AG04449 (cell line): ENCODE measurements at regions of chr1 and their contacts with region 1.

Region 1: DNA sequence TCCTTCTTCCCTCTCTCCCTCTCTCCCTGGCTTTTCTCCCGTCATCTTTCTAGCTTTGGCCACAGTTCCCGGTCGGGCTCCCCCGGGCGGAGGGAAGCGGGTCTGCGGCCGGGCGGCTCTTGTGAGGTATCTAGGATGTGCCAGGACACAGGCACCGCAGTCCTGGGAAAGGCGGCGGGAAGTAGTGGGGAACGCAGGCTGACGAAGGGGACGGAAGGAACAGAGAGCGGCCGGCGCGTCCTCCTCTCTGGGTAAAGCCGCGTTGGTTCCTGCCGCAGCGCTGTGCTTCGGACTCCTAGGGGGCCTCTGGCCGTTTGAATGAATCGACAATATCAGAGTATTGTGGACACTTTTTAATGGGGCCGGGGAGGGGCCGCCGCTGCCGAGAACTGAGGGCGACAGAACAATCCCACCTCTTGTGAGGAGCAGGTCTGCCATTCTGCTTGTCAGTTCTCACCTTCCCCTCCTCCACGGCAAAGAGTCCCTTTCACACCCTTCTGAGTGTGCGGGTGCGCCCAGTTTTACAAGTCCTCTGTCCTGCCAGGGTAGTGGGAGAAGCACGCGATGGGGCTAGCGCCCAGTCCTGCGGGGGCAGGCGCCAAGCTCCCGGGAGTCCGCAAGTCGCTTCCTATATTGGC is 1.2 kb upstream of the LHX9 start:
- DNase-seq: no peak
- H3K4me3 ChIP-seq: peak overlapping the region; percentile 80
- CTCF ChIP-seq: peak; percentile 89

Region 2: DNA sequence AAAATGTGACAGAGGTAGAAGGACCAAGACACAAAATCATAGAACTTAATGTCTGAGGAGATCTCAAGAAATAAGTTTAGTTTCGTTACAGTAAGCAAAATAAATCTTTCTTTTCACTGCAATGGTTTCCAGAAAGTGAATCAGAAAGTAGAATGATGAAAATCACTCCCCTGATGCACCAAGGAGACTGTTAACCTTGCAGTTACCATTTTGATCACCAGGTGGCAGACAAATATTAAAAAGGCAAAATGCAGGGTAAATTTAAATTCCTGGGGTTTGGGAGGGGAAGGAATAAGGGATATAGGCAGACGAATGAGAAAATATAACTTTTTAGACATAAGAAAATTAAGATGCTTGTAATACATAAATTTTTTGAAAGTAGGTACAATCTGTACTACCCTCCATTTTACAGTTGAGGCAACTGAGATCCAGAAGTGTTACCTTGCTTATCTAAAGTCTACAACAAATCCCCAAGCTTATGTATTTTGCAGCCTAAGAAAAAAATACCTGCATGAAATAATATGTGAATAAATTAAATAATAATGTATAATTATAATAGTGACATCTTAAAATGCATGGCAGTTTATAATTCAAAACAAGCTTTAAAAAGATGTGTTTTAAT is 394.8 kb before region 1 on chr1:
- CTCF ChIA-PET with region 1: interaction called, 32 read pairs
- POLR2A ChIA-PET with region 1: no interaction called
- DNase-seq: no peak
- H3K4me3 ChIP-seq: no peak overlapping the region
- CTCF ChIP-seq: peak; percentile 62

Region 3: GRCh38 chr1:197526736-197527371 is 389.1 kb before region 1 on chr1:
- CTCF ChIA-PET with region 1: interaction called, 32 read pairs
- POLR2A ChIA-PET with region 1: no interaction called
- DNase-seq: no peak
- H3K4me3 ChIP-seq: no peak overlapping the region
- CTCF ChIP-seq: peak; percentile 2

Region 4: DNA sequence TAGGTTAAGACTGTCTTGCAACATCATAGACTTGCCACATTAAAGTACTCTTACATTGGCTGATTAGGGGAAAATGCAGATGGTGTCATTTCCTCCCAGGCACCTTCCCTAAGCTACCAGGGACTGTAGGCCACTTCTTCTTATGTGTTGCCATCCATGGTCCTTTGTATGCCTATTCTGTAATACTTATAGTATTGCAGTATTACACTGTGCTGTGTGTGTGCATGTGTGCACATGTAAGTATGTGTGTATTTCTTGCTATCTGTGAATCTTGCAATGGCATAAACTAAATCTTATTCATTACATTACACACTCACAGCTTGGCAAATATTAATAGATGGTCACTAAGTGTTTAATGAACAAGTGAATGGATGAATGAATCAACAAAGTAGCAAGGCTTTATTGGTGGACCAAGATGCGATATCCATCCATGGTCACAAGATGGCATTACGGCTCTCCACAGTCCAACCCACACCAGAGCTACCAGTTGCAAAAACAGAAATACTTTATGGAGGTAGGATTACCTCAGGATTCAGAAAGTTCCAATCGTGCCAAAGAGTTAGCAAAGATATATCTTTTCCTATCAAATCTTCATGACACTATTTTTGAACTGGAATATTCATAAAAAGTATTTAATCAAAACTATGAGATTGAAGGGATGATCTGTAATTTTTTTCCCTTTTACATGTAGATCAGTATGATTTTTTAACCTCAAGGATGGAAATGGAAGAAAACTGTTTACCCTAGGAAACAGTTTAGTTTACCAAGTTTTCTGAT is 300.9 kb before region 1 on chr1:
- CTCF ChIA-PET with region 1: interaction called, 147 read pairs
- POLR2A ChIA-PET with region 1: interaction called, 3 read pairs
- DNase-seq: no peak
- H3K4me3 ChIP-seq: no peak overlapping the region
- CTCF ChIP-seq: peak; percentile 65

Region 5: GRCh38 chr1:197902454-197903195 is 13.4 kb before region 1 on chr1 and contains the start of gene C1orf53:
- CTCF ChIA-PET with region 1: interaction called, 77 read pairs
- POLR2A ChIA-PET with region 1: interaction called, 11 read pairs
- DNase-seq: no peak
- H3K4me3 ChIP-seq: peak within 1 kb of the TSS; percentile 79
- CTCF ChIP-seq: no peak

Region 6: DNA sequence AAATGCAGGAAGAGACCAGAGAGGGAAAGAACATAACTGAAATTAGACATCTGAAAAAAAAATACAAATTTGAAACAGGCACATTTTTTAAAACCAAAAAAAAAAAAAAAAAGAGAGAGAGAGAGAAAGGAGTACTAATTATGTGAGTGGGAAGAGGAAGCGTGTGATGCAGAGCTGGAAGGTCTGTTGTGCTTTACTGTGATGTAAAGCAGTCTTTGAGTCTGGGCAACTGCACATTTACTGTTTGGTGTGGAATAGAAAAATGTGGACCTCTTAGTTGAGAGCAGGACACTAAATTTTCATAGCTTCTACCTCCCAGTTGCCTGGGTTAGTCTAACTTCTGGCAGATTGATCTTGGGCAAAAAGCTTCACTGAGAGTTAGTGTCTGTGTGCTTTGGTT is 17.7 kb after region 1 on chr1:
- CTCF ChIA-PET with region 1: interaction called, 17 read pairs
- POLR2A ChIA-PET with region 1: no interaction called
- DNase-seq: no peak
- H3K4me3 ChIP-seq: no peak overlapping the region
- CTCF ChIP-seq: no peak